ENCODE measurements at regions of chr10 and their contacts with region 1.

Region 1: GRCh38 chr10:63268798-63269503 is 135.8 kb downstream of the NRBF2 start:
- DNase-seq: peak; percentile 71 to 93
- ATAC-seq: peak; percentile 94 to 99
- H3K4me3 ChIP-seq: peak overlapping the region; percentile 55
- H3K27ac ChIP-seq: peak overlapping the region; percentile 78 to 88
- H3K4me1 ChIP-seq: peaks cover 23% of the 10 kb centered on the region
- CTCF ChIP-seq: no peak
- EP300 ChIP-seq: no peak; a peak in 1 of 5 replicates
- POLR2A ChIP-seq: no peak; the same call in 1 of the 2 replicates
- RAD21 ChIP-seq: no peak; a peak in 1 of 5 replicates

Region 2: DNA sequence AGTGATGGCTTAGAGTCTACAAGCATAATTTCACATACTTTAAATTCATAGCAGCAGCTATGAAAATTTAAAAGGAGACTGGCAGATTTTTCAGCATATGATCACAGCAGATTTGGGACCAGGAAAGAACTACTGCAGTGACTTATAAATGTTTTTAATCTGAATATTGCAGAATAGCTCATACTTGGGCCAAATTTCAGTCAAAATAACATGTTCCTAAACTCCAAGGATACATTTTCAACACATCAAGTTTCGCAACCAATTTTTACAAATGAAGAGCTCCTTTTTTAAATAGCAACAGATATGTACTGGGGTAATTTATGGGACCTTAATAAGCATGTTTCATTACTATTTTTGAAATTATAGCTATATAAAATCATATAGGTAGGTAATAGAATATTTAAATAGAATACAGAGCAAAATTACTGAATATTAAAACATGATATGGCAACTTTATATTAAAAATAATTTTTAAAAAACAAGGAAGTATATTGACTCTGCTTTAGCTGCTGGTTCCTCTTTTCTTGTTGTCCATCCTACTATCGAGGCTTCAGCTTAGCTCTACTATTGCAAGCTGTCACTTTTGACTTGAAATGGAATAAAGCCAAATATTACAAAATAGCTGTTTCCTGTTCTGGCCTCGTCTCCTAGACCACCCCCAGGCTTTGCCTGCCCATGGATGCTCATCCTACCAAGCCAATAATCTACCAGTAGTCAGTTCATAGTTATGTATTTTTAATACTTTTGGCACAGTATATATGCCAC is 12.8 kb before region 1 on chr10:
- CTCF ChIA-PET with region 1: interaction called, 4 read pairs
- POLR2A ChIA-PET with region 1: interaction called, 12 read pairs
- DNase-seq: no peak
- ATAC-seq: no peak
- H3K4me3 ChIP-seq: no peak overlapping the region
- H3K27ac ChIP-seq: no peak overlapping the region
- H3K4me1 ChIP-seq: peaks cover 39% of the 10 kb centered on the region
- CTCF ChIP-seq: no peak
- EP300 ChIP-seq: no peak
- POLR2A ChIP-seq: no peak
- RAD21 ChIP-seq: no peak

Region 3: DNA sequence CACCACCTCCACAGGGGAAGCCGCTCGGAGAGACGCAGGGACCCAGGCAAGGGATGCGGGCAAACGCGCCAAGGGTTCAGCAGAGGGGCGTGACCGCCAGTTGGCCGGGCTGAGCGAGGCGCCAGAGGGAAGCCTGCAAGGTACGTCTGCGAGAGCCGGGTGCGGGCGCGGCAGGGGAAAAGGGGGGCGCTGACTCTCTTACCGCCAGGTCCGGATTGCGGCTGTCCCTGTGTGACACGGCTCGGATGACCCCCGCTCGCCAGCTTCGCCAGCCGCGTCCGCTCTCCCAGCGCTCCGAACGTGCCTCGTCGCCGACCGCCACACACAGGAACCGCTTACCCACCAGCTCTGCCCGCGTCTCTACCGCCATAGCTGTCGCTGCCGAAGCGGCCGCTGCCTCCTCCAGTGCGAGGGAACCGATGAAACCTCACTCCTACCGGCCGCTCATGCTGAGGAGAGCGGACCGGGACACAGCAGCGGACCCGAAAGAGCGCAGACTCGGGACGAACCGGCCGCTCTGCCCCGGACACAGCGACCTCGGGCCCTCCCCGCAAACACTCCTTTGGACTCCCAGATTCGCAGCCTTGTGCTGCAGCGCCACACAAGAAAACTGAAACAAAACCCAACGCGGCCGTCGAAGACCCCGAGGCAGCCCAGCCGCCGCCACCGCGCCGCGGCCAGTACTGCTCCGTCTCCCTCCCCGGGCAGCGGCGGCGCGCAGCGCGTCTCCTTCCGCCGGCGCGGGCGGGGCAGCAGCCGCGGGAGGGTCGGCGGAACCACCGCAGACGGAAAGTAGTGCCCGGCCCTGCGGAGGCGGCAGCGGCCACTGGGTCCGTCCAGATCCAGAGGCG is 196.6 kb after region 1 on chr10 and contains the start of gene JMJD1C:
- CTCF ChIA-PET with region 1: no interaction called
- POLR2A ChIA-PET with region 1: interaction called, 17 read pairs
- DNase-seq: peak; percentile 67 to 89
- ATAC-seq: peak; percentile 91
- H3K4me3 ChIP-seq: peak within 1 kb of the TSS; percentile 82
- H3K27ac ChIP-seq: peak within 1 kb of the TSS; percentile 85 to 91
- H3K4me1 ChIP-seq: peaks cover 28% of the 10 kb centered on the region
- CTCF ChIP-seq: no peak; the same call in 2 of the 3 replicates
- EP300 ChIP-seq: no peak
- POLR2A ChIP-seq: peak; percentile 39
- RAD21 ChIP-seq: peak in 1 of 2 experiments; percentile 8; a peak in 1 of 5 replicates
- polyA plus RNA-seq, gene JMJD1C: 47.2 and 51.0 TPM in 2 replicates

Region 4: GRCh38 chr10:63521416-63522276 is 252.7 kb after region 1 on chr10:
- CTCF ChIA-PET with region 1: no interaction called
- POLR2A ChIA-PET with region 1: interaction called, 14 read pairs
- DNase-seq: peak; percentile 56 to 77
- ATAC-seq: peak; percentile 87
- H3K4me3 ChIP-seq: peak overlapping the region; percentile 70
- H3K27ac ChIP-seq: peak overlapping the region; percentile 98 to 99
- H3K4me1 ChIP-seq: peaks cover 20% of the 10 kb centered on the region; the same call in 2 of the 3 replicates
- CTCF ChIP-seq: no peak
- EP300 ChIP-seq: no peak
- POLR2A ChIP-seq: peak; percentile 67
- RAD21 ChIP-seq: peak in 1 of 2 experiments; percentile 21; a peak in 2 of 5 replicates